CD8-positive, alpha-beta T cell (primary cell): ENCODE measurements at regions of chr2 and their contacts with region 1.

Region 1: GRCh38 chr2:38602732-38603401 is at the start of gene HNRNPLL:
- DNase-seq: peak; percentile 79 to 94 (median 91)
- ATAC-seq: peak; percentile 78
- H3K4me3 ChIP-seq: peak within 1 kb of the TSS; percentile 82 to 85
- H3K4me3 Mint-ChIP-seq: peak within 1 kb of the TSS; percentile 95
- H3K27ac ChIP-seq: peak within 1 kb of the TSS; percentile 54 to 64
- H3K27ac Mint-ChIP-seq: peak within 1 kb of the TSS; percentile 91
- H3K4me1 ChIP-seq: peaks cover 23% of the 10 kb centered on the region
- H3K4me1 Mint-ChIP-seq: peaks cover 47% of the 10 kb centered on the region
- H3K27me3 ChIP-seq: no peaks in the 10 kb centered on the region
- H3K27me3 Mint-ChIP-seq: no peaks in the 10 kb centered on the region
- CTCF ChIP-seq: no peak
- total RNA-seq, gene HNRNPLL: 35.0 to 37.6 TPM

Region 2: GRCh38 chr2:37966326-37966725 is 636.5 kb before region 1 on chr2:
- CTCF ChIA-PET with region 1: no interaction called
- POLR2A ChIA-PET with region 1: no interaction called
- intact Hi-C with region 1: no loop called
- DNase-seq: no peak
- ATAC-seq: no peak
- H3K4me3 ChIP-seq: no peak overlapping the region
- H3K4me3 Mint-ChIP-seq: no peak overlapping the region
- H3K27ac ChIP-seq: no peak overlapping the region
- H3K27ac Mint-ChIP-seq: no peak overlapping the region
- H3K4me1 ChIP-seq: no peaks in the 10 kb centered on the region
- H3K4me1 Mint-ChIP-seq: no peaks in the 10 kb centered on the region
- H3K27me3 ChIP-seq: no peaks in the 10 kb centered on the region
- H3K27me3 Mint-ChIP-seq: no peaks in the 10 kb centered on the region
- CTCF ChIP-seq: no peak

Region 3: GRCh38 chr2:38106405-38107094 is 496.3 kb before region 1 on chr2:
- CTCF ChIA-PET with region 1: no interaction called
- POLR2A ChIA-PET with region 1: no interaction called
- intact Hi-C with region 1: no loop called
- DNase-seq: no peak
- ATAC-seq: no peak
- H3K4me3 ChIP-seq: no peak overlapping the region
- H3K4me3 Mint-ChIP-seq: no peak overlapping the region
- H3K27ac ChIP-seq: no peak overlapping the region
- H3K27ac Mint-ChIP-seq: no peak overlapping the region
- H3K4me1 ChIP-seq: no peaks in the 10 kb centered on the region
- H3K4me1 Mint-ChIP-seq: no peaks in the 10 kb centered on the region
- H3K27me3 ChIP-seq: no peaks in the 10 kb centered on the region
- H3K27me3 Mint-ChIP-seq: peaks cover 30% of the 10 kb centered on the region
- CTCF ChIP-seq: no peak

Region 4: DNA sequence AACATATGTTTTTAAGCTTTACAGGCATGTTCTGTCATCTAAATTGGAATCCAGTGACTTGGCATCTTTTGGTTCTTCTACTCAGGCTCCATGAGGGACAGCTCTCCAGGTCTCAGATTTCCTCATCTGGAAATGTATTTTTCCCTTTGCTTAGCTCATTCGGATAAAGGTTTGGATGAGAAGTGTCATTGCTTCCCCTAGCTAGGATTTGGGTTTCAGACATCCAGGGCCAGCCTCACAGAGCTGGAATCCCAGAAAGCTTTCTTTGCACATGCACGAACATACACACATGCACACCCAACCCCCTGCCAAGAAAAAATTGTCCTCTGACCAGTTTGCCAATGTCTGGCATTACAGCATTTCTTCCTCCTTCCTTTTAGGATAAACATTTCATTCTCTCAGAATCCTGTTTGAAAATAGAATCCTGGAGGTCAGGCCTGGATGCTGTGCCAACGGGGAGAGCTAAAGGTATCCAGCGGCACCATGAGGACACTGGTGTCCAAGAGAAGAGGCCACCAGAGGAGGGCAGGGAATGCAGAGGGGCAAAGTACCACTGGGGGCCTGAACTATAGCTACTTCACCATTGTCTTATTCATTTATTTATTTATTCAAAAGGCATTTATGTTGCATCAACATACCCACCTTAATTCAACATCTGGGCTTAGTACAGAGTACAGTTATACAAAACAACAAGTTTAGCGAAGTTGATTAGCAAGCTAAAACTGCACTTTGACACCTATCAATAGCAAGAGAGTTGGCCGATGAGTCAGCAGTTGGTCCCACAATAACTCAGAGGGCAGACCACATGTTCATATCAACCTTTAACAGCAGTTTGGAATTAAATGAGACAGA is 127.9 kb before region 1 on chr2:
- CTCF ChIA-PET with region 1: no interaction called
- POLR2A ChIA-PET with region 1: no interaction called
- intact Hi-C with region 1: no loop called
- DNase-seq: no peak
- ATAC-seq: no peak
- H3K4me3 ChIP-seq: no peak overlapping the region
- H3K4me3 Mint-ChIP-seq: no peak overlapping the region
- H3K27ac ChIP-seq: no peak overlapping the region
- H3K27ac Mint-ChIP-seq: no peak overlapping the region
- H3K4me1 ChIP-seq: no peaks in the 10 kb centered on the region
- H3K4me1 Mint-ChIP-seq: no peaks in the 10 kb centered on the region
- H3K27me3 ChIP-seq: no peaks in the 10 kb centered on the region
- H3K27me3 Mint-ChIP-seq: peaks cover 13% of the 10 kb centered on the region
- CTCF ChIP-seq: no peak

Region 5: DNA sequence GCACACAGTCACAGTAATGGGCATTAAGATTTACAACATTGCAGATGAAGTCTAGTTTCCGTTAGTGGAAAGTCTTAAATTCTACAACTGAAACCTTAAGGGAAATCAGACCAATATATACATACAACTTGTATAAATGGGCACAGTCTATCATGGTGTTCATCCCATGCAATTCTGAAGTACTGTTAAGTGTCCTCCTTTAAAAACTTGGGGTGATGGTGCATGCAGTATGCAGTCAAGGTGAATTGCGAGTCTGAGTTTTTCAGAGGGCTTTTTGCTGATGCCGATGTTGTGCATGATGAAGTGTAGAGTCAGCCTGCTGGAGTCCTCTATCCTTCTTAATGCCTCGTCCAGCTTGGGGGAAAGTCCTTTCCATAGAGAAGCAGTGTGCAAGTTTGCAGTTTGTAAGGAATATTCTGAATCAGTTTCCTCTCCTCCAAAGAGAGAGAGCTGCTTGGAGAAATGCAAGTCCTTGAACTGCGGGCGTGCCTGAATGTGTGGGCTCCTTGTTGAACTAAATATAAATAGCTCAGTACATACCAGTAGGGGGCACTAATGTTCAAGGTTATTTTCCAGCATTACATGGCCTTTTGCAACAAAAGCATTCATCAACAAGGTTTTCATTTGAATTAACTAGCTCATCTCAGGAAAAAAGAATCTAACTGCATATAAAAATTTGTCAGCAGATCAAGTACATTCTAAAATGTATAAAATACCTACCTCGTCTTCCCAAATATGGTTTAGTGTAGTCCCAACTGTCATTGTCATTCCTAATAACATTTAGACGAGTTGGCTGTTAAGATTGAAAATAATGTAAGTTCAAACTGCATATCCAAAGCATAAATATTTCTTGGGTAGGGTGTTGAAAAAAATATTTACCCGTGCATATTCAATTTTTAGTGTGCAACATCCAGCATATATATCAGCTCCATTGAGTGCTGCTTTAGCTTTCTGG is 21.4 kb before region 1 on chr2:
- CTCF ChIA-PET with region 1: interaction called, 82 read pairs
- POLR2A ChIA-PET with region 1: interaction called, 4 read pairs
- intact Hi-C with region 1: loop called in 1 of 2 experiments (anchors 1 kb)
- DNase-seq: peak in 6 of 9 experiments; percentile 33 to 85 (median 63)
- ATAC-seq: peak; percentile 93
- H3K4me3 ChIP-seq: no peak overlapping the region
- H3K4me3 Mint-ChIP-seq: no peak overlapping the region
- H3K27ac ChIP-seq: no peak overlapping the region
- H3K27ac Mint-ChIP-seq: no peak overlapping the region
- H3K4me1 ChIP-seq: no peaks in the 10 kb centered on the region
- H3K4me1 Mint-ChIP-seq: peaks cover 6% of the 10 kb centered on the region
- H3K27me3 ChIP-seq: no peaks in the 10 kb centered on the region
- H3K27me3 Mint-ChIP-seq: no peaks in the 10 kb centered on the region
- CTCF ChIP-seq: peak; percentile 68

Region 6: GRCh38 chr2:38665854-38666555 is 63.1 kb after region 1 on chr2 and contains the start of gene GALM:
- CTCF ChIA-PET with region 1: interaction called, 38 read pairs
- POLR2A ChIA-PET with region 1: interaction called, 34 read pairs
- intact Hi-C with region 1: loop called (anchors 1 to 2 kb)
- DNase-seq: peak in 7 of 9 experiments; percentile 18 to 79 (median 47)
- ATAC-seq: peak; percentile 33
- H3K4me3 ChIP-seq: peak within 1 kb of the TSS; percentile 88 to 92
- H3K4me3 Mint-ChIP-seq: peak within 1 kb of the TSS; percentile 88
- H3K27ac ChIP-seq: peak within 1 kb of the TSS; percentile 22 to 72
- H3K27ac Mint-ChIP-seq: peak within 1 kb of the TSS; percentile 90
- H3K4me1 ChIP-seq: peaks cover 16% of the 10 kb centered on the region
- H3K4me1 Mint-ChIP-seq: peaks cover 56% of the 10 kb centered on the region
- H3K27me3 ChIP-seq: no peaks in the 10 kb centered on the region
- H3K27me3 Mint-ChIP-seq: no peaks in the 10 kb centered on the region
- CTCF ChIP-seq: no peak
- total RNA-seq, gene GALM: 4.4 to 4.7 TPM

Region 7: DNA sequence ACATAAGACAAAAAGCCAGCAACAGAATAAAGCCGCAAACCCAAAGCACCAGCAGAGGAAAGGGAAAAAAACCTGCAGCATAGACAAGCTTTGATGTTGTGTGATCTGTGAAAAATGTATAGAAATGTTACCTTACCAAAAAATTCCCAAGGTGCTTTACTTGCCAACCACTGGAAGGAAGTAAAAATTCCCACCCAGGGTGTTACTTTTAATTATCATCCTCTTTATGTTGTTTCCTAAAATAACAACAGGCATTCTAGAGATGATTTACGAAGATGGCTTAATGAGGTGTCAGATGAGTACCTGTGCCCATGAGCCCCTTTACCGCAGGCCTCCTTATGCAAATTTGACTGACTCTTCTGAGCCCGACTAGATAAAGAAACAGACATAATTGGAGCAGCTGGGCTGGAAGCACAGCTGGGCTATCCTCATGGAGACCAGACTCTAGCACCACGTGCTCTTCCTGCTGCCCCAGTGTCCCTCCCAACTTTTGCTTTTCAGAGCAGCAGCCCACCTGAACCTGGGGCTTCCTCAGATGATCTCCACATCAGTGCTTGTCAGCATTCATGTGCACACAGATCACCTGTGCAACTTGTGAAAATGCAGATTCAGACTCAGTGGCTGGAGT is 106.8 kb after region 1 on chr2:
- CTCF ChIA-PET with region 1: interaction called, 10 read pairs
- POLR2A ChIA-PET with region 1: interaction called, 4 read pairs
- intact Hi-C with region 1: loop called in 1 of 2 experiments (anchors 1 kb)
- DNase-seq: peak in 4 of 9 experiments; percentile 30 to 85 (median 68)
- ATAC-seq: peak; percentile 77
- H3K4me3 ChIP-seq: no peak overlapping the region
- H3K4me3 Mint-ChIP-seq: peak overlapping the region; percentile 66
- H3K27ac ChIP-seq: peak overlapping the region in 1 of 2 experiments; percentile 51
- H3K27ac Mint-ChIP-seq: peak overlapping the region; percentile 89
- H3K4me1 ChIP-seq: peaks cover 22% of the 10 kb centered on the region
- H3K4me1 Mint-ChIP-seq: peaks cover 42% of the 10 kb centered on the region
- H3K27me3 ChIP-seq: no peaks in the 10 kb centered on the region
- H3K27me3 Mint-ChIP-seq: no peaks in the 10 kb centered on the region
- CTCF ChIP-seq: no peak

Region 8: GRCh38 chr2:38734299-38735058 is 131.6 kb after region 1 on chr2:
- CTCF ChIA-PET with region 1: interaction called, 17 read pairs
- POLR2A ChIA-PET with region 1: no interaction called
- intact Hi-C with region 1: no loop called
- DNase-seq: no peak
- ATAC-seq: no peak
- H3K4me3 ChIP-seq: no peak overlapping the region
- H3K4me3 Mint-ChIP-seq: no peak overlapping the region
- H3K27ac ChIP-seq: no peak overlapping the region
- H3K27ac Mint-ChIP-seq: no peak overlapping the region
- H3K4me1 ChIP-seq: no peaks in the 10 kb centered on the region
- H3K4me1 Mint-ChIP-seq: peaks cover 7% of the 10 kb centered on the region
- H3K27me3 ChIP-seq: no peaks in the 10 kb centered on the region
- H3K27me3 Mint-ChIP-seq: no peaks in the 10 kb centered on the region
- CTCF ChIP-seq: no peak

Region 9: DNA sequence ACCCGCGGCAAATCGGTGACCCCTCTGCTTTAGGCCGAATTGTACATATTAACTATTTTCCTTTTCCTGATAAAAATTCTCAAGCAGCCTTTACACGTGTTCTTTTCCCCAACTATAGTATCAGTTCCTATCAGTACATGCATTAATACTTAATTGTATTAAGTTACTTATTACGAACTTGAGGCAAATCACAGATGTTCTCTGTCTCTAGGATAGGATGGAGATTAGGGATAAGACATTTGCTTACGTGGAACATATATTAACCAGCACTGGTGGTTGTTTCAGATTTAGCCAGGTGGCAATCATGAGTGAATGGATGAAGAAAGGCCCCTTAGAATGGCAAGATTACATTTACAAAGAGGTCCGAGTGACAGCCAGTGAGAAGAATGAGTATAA is 175.8 kb after region 1 on chr2:
- CTCF ChIA-PET with region 1: no interaction called
- POLR2A ChIA-PET with region 1: no interaction called
- intact Hi-C with region 1: loop called in 1 of 2 experiments (anchors 1 kb)
- DNase-seq: no peak
- ATAC-seq: no peak
- H3K4me3 ChIP-seq: peak overlapping the region; percentile 64 to 68
- H3K4me3 Mint-ChIP-seq: peak overlapping the region; percentile 98
- H3K27ac ChIP-seq: peak overlapping the region; percentile 72 to 77
- H3K27ac Mint-ChIP-seq: peak overlapping the region; percentile 99
- H3K4me1 ChIP-seq: peaks cover 6% of the 10 kb centered on the region
- H3K4me1 Mint-ChIP-seq: peaks cover 17% of the 10 kb centered on the region
- H3K27me3 ChIP-seq: peaks cover 0 to 3% of the 10 kb centered on the region in 2 experiments
- H3K27me3 Mint-ChIP-seq: peaks cover 6% of the 10 kb centered on the region
- CTCF ChIP-seq: no peak